ENCODE measurements at regions of chr2 and their contacts with region 1.

Region 1: GRCh38 chr2:226984750-226985582 is 149.1 kb downstream of the RHBDD1 start:
- DNase-seq: no peak

Region 2: DNA sequence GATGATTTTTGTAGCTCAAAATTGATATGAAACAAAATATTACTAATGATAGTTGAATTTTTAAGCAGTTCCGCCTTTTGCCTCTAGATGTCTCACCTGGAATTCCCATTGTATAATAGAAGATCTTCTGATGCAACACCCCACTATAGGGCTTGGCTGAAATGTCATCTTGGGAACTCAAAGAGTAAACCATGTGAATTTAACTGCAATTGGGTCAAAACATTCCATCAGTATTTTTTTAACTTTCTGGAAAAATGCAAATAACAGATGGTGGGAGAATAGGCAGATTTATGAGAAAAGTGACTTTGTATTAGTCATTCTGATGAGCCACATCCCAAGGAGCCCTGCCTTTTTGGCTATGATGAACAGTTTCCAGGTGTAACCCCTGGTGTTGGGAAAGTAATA is 1095.5 kb before region 1 on chr2:
- intact Hi-C with region 1: loop called (anchors 5 kb)
- DNase-seq: no peak

Measured in cardiac septum (tissue), 1 donor.